Astrocyte of the cerebellum (primary cell): ENCODE measurements at regions of chr3 and their contacts with region 1.

Region 1: DNA sequence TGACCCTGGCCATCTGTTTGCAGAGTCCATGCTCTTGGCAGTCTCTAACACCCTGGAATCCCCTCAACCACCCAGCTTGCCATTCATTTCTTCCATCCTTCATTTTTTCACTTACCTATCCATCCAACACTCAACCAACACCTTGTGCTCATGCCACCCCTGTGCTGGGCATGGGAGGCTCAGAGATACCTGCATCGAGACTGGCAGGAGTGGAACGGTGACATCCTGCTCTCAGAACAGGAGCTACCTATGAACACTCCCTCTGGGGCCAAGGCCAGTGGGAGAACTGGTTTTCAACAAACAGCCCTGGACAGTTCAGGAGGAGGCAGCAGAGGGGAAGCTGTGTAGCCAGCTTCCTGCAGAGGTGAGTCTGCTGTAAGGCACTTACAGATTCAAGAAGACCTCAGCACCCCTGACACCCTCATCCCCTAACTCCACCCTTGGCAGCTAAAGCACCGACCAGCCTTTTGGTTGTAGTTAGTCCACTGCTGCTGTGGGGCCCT is 19.5 kb upstream of the ATP2B2 start:
- DNase-seq: no peak
- H3K4me3 ChIP-seq: no peak overlapping the region
- CTCF ChIP-seq: no peak

Region 2: GRCh38 chr3:10437272-10437994 is 87.4 kb before region 1 on chr3:
- in situ Hi-C with region 1: loop called (anchors 5 kb)
- DNase-seq: peak; percentile 4
- H3K4me3 ChIP-seq: no peak overlapping the region
- CTCF ChIP-seq: no peak

Region 3: GRCh38 chr3:10563396-10563795 is 38.5 kb after region 1 on chr3:
- in situ Hi-C with region 1: loop called (anchors 5 kb)
- DNase-seq: no peak
- H3K4me3 ChIP-seq: no peak overlapping the region
- CTCF ChIP-seq: no peak